ENCODE measurements at regions of chr2 and their contacts with region 1.

Region 1: GRCh38 chr2:222311978-222312738 is 13.4 kb upstream of the PAX3 start:
- DNase-seq: no peak
- H3K4me3 Mint-ChIP-seq: peak overlapping the region; percentile 10
- H3K27ac Mint-ChIP-seq: no peak overlapping the region
- H3K4me1 Mint-ChIP-seq: peaks cover 15% of the 10 kb centered on the region
- H3K27me3 Mint-ChIP-seq: peaks cover 81% of the 10 kb centered on the region

Region 2: GRCh38 chr2:222248256-222248655 is 63.9 kb before region 1 on chr2:
- CTCF ChIA-PET with region 1: no interaction called
- POLR2A ChIA-PET with region 1: no interaction called
- intact Hi-C with region 1: no loop called
- DNase-seq: no peak
- H3K4me3 Mint-ChIP-seq: no peak overlapping the region
- H3K27ac Mint-ChIP-seq: no peak overlapping the region
- H3K4me1 Mint-ChIP-seq: no peaks in the 10 kb centered on the region
- H3K27me3 Mint-ChIP-seq: peaks cover 11% of the 10 kb centered on the region

Region 3: GRCh38 chr2:222293660-222294630 is 18.2 kb before region 1 on chr2:
- CTCF ChIA-PET with region 1: interaction called, 3 read pairs
- POLR2A ChIA-PET with region 1: no interaction called
- intact Hi-C with region 1: loop called (anchors 1 kb)
- DNase-seq: no peak
- H3K4me3 Mint-ChIP-seq: no peak overlapping the region
- H3K27ac Mint-ChIP-seq: no peak overlapping the region
- H3K4me1 Mint-ChIP-seq: peaks cover 35% of the 10 kb centered on the region
- H3K27me3 Mint-ChIP-seq: peaks cover 90% of the 10 kb centered on the region

Region 4: DNA sequence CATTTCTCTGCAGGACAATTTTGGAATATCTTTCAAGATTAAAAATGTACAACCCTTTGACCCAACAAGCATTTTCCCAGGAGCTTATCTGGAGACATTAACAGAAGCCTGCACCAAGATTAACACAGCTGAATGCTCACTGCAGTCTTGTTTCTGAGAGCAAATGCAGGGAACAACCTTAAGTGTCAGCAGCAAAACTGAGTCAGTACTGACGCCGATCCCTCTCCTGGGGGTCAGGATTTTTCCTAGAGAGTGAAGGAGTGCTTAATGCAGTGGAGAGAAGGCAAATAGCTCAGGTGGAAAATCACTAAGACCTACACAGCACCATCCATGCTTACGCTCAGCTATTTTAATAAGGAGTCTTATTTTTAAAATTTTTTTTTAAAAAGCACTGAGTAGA is 69.4 kb after region 1 on chr2:
- CTCF ChIA-PET with region 1: no interaction called
- POLR2A ChIA-PET with region 1: no interaction called
- intact Hi-C with region 1: no loop called
- DNase-seq: no peak
- H3K4me3 Mint-ChIP-seq: no peak overlapping the region
- H3K27ac Mint-ChIP-seq: no peak overlapping the region
- H3K4me1 Mint-ChIP-seq: no peaks in the 10 kb centered on the region
- H3K27me3 Mint-ChIP-seq: peaks cover 8% of the 10 kb centered on the region